CD4-positive, alpha-beta memory T cell (primary cell): ENCODE measurements at regions of chr10 and their contacts with region 1.

Region 1: GRCh38 chr10:113960617-113961181 is 83.0 kb upstream of the ADRB1 start:
- DNase-seq: peak; percentile 65 to 75 (median 72)
- H3K4me3 ChIP-seq: peak overlapping the region; percentile 14 to 57
- H3K4me3 Mint-ChIP-seq: peak overlapping the region; percentile 61 to 86 (median 76)
- H3K27ac ChIP-seq: peak overlapping the region; percentile 46
- H3K27ac Mint-ChIP-seq: peak overlapping the region; percentile 89 to 98 (median 95)
- H3K4me1 ChIP-seq: peaks cover 63% of the 10 kb centered on the region
- H3K4me1 Mint-ChIP-seq: peaks cover 36 to 58% (median 52%) of the 10 kb centered on the region in 4 donors
- H3K27me3 ChIP-seq: no peaks in the 10 kb centered on the region
- H3K27me3 Mint-ChIP-seq: peaks cover 0 to 2% of the 10 kb centered on the region in 2 donors

Region 2: GRCh38 chr10:113678690-113679462 is 281.8 kb before region 1 on chr10:
- CTCF ChIA-PET with region 1: interaction called, 3 read pairs
- POLR2A ChIA-PET with region 1: interaction called, 10 read pairs
- intact Hi-C with region 1: no loop called
- DNase-seq: peak; percentile 41 to 70 (median 56)
- H3K4me3 ChIP-seq: peak overlapping the region; percentile 69 to 85
- H3K4me3 Mint-ChIP-seq: peak overlapping the region; percentile 93 to 98 (median 96)
- H3K27ac ChIP-seq: peak overlapping the region; percentile 69
- H3K27ac Mint-ChIP-seq: peak overlapping the region; percentile 70 to 98 (median 91)
- H3K4me1 ChIP-seq: peaks cover 30% of the 10 kb centered on the region
- H3K4me1 Mint-ChIP-seq: peaks cover 35 to 45% (median 37%) of the 10 kb centered on the region in 4 donors
- H3K27me3 ChIP-seq: no peaks in the 10 kb centered on the region
- H3K27me3 Mint-ChIP-seq: peaks cover 0 to 2% of the 10 kb centered on the region in 2 donors

Region 3: GRCh38 chr10:113788604-113789083 is 172.1 kb before region 1 on chr10:
- CTCF ChIA-PET with region 1: no interaction called
- POLR2A ChIA-PET with region 1: no interaction called
- intact Hi-C with region 1: no loop called
- DNase-seq: no peak
- H3K4me3 ChIP-seq: no peak overlapping the region
- H3K4me3 Mint-ChIP-seq: no peak overlapping the region
- H3K27ac ChIP-seq: no peak overlapping the region
- H3K27ac Mint-ChIP-seq: no peak overlapping the region
- H3K4me1 ChIP-seq: no peaks in the 10 kb centered on the region
- H3K4me1 Mint-ChIP-seq: no peaks in the 10 kb centered on the region
- H3K27me3 ChIP-seq: peaks cover 3% of the 10 kb centered on the region
- H3K27me3 Mint-ChIP-seq: peaks cover 9 to 23% of the 10 kb centered on the region in 2 donors

Region 4: DNA sequence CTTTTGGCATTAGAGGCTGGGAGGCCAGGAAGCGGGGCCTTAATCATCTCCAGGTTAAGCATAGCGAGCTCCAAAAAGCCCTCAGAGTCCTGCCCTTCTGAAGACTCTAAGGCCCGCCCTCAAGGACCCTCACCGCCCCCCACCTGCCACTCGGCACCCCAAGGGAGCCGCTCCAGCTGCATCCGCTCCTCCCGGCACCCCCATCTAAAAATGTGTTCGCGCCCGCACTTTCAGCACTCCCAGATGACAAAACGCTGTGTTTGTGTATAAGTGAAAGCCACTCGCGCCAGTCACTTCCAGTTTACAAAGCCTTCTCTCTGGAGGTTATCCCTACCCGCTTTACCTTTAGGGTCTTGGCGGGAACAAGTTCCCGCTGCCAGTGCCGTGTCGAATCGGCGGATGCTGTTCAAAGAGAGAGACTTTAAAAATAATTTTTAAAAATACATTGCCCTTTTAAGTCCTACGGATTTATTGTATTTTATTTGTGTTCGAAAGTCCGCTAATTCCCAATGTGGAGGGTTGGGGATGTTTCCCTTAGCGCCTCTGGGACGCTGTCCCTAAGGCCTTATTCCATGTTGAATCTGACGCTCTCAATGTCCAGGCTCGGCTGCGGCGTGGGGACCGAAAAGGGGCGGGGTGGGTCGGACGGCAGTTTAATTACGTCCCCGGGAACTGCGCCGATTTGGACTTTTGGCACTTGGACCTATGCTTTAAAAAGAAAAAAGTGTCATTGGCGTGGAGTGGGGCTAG is 106.5 kb before region 1 on chr10 and contains the starts of genes DCLRE1A and NHLRC2:
- CTCF ChIA-PET with region 1: no interaction called
- POLR2A ChIA-PET with region 1: interaction called, 6 read pairs
- intact Hi-C with region 1: loop called (anchors 1 kb)
- DNase-seq: peak; percentile 46 to 65 (median 53)
- H3K4me3 ChIP-seq: peak within 1 kb of the TSS; percentile 90 to 97
- H3K4me3 Mint-ChIP-seq: peak within 1 kb of the TSS; percentile 96 to 100 (median 98)
- H3K27ac ChIP-seq: peak within 1 kb of the TSS; percentile 71
- H3K27ac Mint-ChIP-seq: peak within 1 kb of the TSS; percentile 92 to 98 (median 97)
- H3K4me1 ChIP-seq: peaks cover 65% of the 10 kb centered on the region
- H3K4me1 Mint-ChIP-seq: peaks cover 31 to 61% (median 44%) of the 10 kb centered on the region in 4 donors
- H3K27me3 ChIP-seq: no peaks in the 10 kb centered on the region
- H3K27me3 Mint-ChIP-seq: no peaks in the 10 kb centered on the region
- total RNA-seq, gene DCLRE1A: 4.5 to 4.7 TPM
- total RNA-seq, gene NHLRC2: 22.1 to 24.1 TPM

Region 5: DNA sequence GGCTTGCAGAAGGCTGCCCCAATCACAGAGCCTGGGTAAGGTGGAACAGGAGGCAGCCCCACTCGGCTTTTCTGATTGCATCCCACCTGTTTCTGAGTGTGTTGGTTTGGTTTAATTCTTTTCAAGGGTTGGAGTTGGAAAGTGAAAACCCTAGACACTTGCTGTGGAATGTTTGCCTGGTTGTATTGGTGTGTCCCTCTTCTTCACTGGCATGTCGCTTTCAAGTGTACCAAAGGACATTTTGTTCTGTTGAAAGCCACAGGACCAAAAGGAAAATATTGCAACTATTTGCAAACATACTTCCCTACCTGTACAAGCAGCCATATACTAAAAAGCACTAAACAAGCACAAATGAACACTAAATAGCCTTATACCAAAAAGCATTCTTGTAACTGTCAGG is 45.7 kb before region 1 on chr10:
- CTCF ChIA-PET with region 1: interaction called, 3 read pairs
- POLR2A ChIA-PET with region 1: interaction called, 3 read pairs
- intact Hi-C with region 1: loop called (anchors 5 kb)
- DNase-seq: no peak
- H3K4me3 ChIP-seq: no peak overlapping the region
- H3K4me3 Mint-ChIP-seq: no peak overlapping the region
- H3K27ac ChIP-seq: no peak overlapping the region
- H3K27ac Mint-ChIP-seq: no peak overlapping the region
- H3K4me1 ChIP-seq: no peaks in the 10 kb centered on the region
- H3K4me1 Mint-ChIP-seq: no peaks in the 10 kb centered on the region
- H3K27me3 ChIP-seq: no peaks in the 10 kb centered on the region
- H3K27me3 Mint-ChIP-seq: no peaks in the 10 kb centered on the region

Region 6: DNA sequence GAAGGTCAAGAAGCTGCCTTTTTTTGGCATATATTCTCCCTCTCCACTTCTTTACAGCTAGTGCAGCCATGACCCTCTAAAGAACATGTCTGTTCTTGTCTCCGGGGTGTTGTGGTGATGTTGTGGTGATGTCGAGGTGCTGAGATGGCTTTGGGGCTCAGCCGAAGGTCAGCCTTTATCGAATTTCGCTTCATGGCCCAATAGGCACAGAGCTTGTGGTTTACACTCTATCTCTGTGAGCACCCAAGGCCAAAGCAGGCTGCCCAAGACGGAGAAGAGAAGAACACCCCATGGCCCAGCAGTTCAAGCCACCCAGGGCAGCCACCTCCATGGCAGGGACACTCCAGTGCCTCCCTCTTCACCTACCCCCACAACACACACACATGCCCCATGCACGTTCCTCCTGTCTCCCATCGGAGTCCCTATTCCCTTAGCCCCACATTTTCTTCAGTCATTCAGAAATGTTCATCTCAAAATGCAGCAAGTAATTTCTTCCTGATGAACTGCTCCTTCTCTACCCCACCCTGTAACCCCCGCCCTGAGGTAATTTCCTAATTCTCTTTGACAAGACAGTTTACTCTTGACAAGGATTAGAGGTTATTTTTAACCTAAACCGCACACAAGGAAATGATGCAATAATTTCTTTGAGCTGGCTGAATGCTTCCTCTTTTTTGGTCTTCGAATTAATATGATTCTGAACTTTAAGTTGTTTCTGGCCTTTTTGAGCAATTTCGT is 64.3 kb after region 1 on chr10:
- CTCF ChIA-PET with region 1: no interaction called
- POLR2A ChIA-PET with region 1: interaction called, 3 read pairs
- intact Hi-C with region 1: loop called (anchors 1 kb)
- DNase-seq: peak; percentile 21 to 64 (median 28)
- H3K4me3 ChIP-seq: no peak overlapping the region
- H3K4me3 Mint-ChIP-seq: peak overlapping the region in 6 of 8 donors; percentile 30 to 67 (median 56)
- H3K27ac ChIP-seq: no peak overlapping the region
- H3K27ac Mint-ChIP-seq: no peak overlapping the region
- H3K4me1 ChIP-seq: peaks cover 15% of the 10 kb centered on the region
- H3K4me1 Mint-ChIP-seq: peaks cover 12 to 29% (median 19%) of the 10 kb centered on the region in 4 donors
- H3K27me3 ChIP-seq: no peaks in the 10 kb centered on the region
- H3K27me3 Mint-ChIP-seq: peaks cover 2 to 26% of the 10 kb centered on the region in 2 donors

Region 7: GRCh38 chr10:114083040-114083439 is 122.3 kb after region 1 on chr10:
- CTCF ChIA-PET with region 1: no interaction called
- POLR2A ChIA-PET with region 1: interaction called, 10 read pairs
- intact Hi-C with region 1: loop called (anchors 10 kb)
- DNase-seq: peak in 1 of 5 donors; percentile 12
- H3K4me3 ChIP-seq: no peak overlapping the region
- H3K4me3 Mint-ChIP-seq: no peak overlapping the region
- H3K27ac ChIP-seq: no peak overlapping the region
- H3K27ac Mint-ChIP-seq: no peak overlapping the region
- H3K4me1 ChIP-seq: no peaks in the 10 kb centered on the region
- H3K4me1 Mint-ChIP-seq: no peaks in the 10 kb centered on the region
- H3K27me3 ChIP-seq: no peaks in the 10 kb centered on the region
- H3K27me3 Mint-ChIP-seq: peaks cover 0 to 5% of the 10 kb centered on the region in 2 donors

Region 8: GRCh38 chr10:114151486-114151885 is 190.8 kb after region 1 on chr10:
- CTCF ChIA-PET with region 1: no interaction called
- POLR2A ChIA-PET with region 1: no interaction called
- intact Hi-C with region 1: no loop called
- DNase-seq: no peak
- H3K4me3 ChIP-seq: no peak overlapping the region
- H3K4me3 Mint-ChIP-seq: no peak overlapping the region
- H3K27ac ChIP-seq: no peak overlapping the region
- H3K27ac Mint-ChIP-seq: peak overlapping the region in 1 of 7 donors; percentile 8
- H3K4me1 ChIP-seq: no peaks in the 10 kb centered on the region
- H3K4me1 Mint-ChIP-seq: peaks cover 3 to 16% (median 7%) of the 10 kb centered on the region in 4 donors
- H3K27me3 ChIP-seq: no peaks in the 10 kb centered on the region
- H3K27me3 Mint-ChIP-seq: no peaks in the 10 kb centered on the region

Region 9: GRCh38 chr10:114173921-114174694 is 213.4 kb after region 1 on chr10 and contains the start of gene CCDC186:
- CTCF ChIA-PET with region 1: no interaction called
- POLR2A ChIA-PET with region 1: interaction called, 14 read pairs
- intact Hi-C with region 1: loop called (anchors 2 kb)
- DNase-seq: peak; percentile 97 to 98 (median 97)
- H3K4me3 ChIP-seq: peak within 1 kb of the TSS; percentile 47 to 84
- H3K4me3 Mint-ChIP-seq: peak within 1 kb of the TSS; percentile 92 to 99 (median 98)
- H3K27ac ChIP-seq: peak within 1 kb of the TSS; percentile 85
- H3K27ac Mint-ChIP-seq: peak within 1 kb of the TSS; percentile 83 to 99 (median 99)
- H3K4me1 ChIP-seq: peaks cover 35% of the 10 kb centered on the region
- H3K4me1 Mint-ChIP-seq: peaks cover 31 to 57% (median 38%) of the 10 kb centered on the region in 4 donors
- H3K27me3 ChIP-seq: no peaks in the 10 kb centered on the region
- H3K27me3 Mint-ChIP-seq: peaks cover 0 to 1% of the 10 kb centered on the region in 2 donors
- total RNA-seq, gene CCDC186: 39.1 to 43.3 TPM